ENCODE measurements at regions of chr5 and their contacts with region 1.

Region 1: DNA sequence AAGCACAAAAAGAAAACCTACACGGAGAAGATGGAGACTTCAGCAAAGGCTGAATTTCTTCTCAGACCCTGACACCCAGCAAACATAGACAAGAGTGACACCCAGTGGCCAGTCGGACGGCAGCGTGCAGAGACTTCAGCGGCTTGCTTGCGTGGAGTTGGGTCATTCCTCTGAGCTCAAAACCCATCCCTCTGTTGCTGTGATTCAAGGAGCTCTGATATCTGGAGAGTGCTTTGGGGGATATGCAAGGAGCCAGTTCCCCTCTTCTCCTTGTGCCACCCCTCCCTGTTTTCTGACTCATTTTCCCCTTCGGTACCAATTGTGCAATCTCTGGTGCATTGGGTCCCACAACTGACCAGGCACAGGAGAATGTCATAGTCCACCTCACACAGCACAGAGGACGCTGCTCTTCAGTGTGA is 27.5 kb downstream of the SH3TC2 start:
- DNase-seq: peak; percentile 64
- H3K4me3 ChIP-seq: no peak overlapping the region
- H3K27ac ChIP-seq: no peak overlapping the region
- H3K27me3 ChIP-seq: no peaks in the 10 kb centered on the region
- CTCF ChIP-seq: peak; percentile 95

Region 2: DNA sequence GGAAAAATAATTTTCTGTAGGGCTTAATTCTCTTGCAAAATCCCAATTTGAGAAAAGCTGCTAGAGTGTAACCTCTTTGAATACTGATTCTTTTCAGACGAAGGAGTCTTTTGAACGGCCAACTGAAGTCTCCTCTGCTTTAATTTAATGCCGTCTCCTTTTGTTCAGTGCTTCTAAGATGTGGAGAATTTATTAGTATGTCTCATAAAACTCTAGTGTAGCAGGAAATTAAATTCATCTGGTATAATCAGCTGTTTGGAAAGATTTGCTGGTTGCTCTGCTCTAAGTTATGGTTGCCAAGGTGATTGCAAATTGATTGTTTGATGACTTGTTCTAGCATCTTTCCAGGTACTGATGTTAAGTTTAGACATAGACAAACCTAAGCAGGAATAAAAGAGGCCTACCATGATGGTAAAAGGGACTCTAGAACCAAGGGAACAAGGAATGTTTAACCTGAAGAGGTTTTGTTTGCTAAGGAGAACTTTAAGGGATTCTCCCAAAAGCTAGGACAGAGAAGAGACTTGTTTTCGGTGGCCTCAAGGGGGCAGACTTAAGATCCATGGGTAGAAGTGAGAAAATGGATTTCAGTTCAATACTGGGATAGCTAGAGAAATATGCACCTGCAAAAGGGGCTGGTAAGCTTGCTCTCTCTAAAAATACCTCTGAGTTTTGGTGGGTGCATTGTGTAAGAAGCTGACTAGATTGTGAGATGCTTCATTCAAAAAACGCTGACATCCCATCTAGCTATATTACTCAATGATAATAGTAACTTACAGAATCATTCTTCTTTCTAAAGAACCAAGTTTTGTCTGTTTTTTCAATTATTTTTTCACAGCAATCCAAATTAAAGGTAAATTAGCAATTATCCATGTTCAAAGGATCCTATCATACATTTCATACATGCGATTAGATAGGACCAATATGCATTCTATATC is 214.7 kb before region 1 on chr5:
- CTCF ChIA-PET with region 1: interaction called, 29 read pairs
- POLR2A ChIA-PET with region 1: no interaction called
- DNase-seq: no peak
- H3K4me3 ChIP-seq: no peak overlapping the region
- H3K27ac ChIP-seq: no peak overlapping the region
- H3K27me3 ChIP-seq: no peaks in the 10 kb centered on the region
- CTCF ChIP-seq: peak; percentile 68

Region 3: GRCh38 chr5:148957591-148958202 is 77.7 kb before region 1 on chr5:
- CTCF ChIA-PET with region 1: interaction called, 71 read pairs
- POLR2A ChIA-PET with region 1: no interaction called
- DNase-seq: no peak
- H3K4me3 ChIP-seq: no peak overlapping the region
- H3K27ac ChIP-seq: no peak overlapping the region
- H3K27me3 ChIP-seq: no peaks in the 10 kb centered on the region
- CTCF ChIP-seq: peak; percentile 90

Region 4: GRCh38 chr5:149018909-149019443 is 16.4 kb before region 1 on chr5:
- CTCF ChIA-PET with region 1: interaction called, 38 read pairs
- POLR2A ChIA-PET with region 1: interaction called, 7 read pairs
- DNase-seq: no peak
- H3K4me3 ChIP-seq: no peak overlapping the region
- H3K27ac ChIP-seq: no peak overlapping the region
- H3K27me3 ChIP-seq: no peaks in the 10 kb centered on the region
- CTCF ChIP-seq: no peak

Region 5: GRCh38 chr5:149053072-149053695 is 17.8 kb after region 1 on chr5:
- CTCF ChIA-PET with region 1: interaction called, 42 read pairs
- POLR2A ChIA-PET with region 1: no interaction called
- DNase-seq: no peak
- H3K4me3 ChIP-seq: no peak overlapping the region
- H3K27ac ChIP-seq: no peak overlapping the region
- H3K27me3 ChIP-seq: no peaks in the 10 kb centered on the region
- CTCF ChIP-seq: no peak

Region 6: GRCh38 chr5:149268928-149269557 is 233.7 kb after region 1 on chr5:
- CTCF ChIA-PET with region 1: interaction called, 11 read pairs
- POLR2A ChIA-PET with region 1: no interaction called
- DNase-seq: no peak
- H3K4me3 ChIP-seq: no peak overlapping the region
- H3K27ac ChIP-seq: no peak overlapping the region
- H3K27me3 ChIP-seq: peaks cover 3% of the 10 kb centered on the region
- CTCF ChIP-seq: peak; percentile 74